HepG2 (cell line): ENCODE measurements at regions of chr20 and their contacts with region 1.

Region 1: DNA sequence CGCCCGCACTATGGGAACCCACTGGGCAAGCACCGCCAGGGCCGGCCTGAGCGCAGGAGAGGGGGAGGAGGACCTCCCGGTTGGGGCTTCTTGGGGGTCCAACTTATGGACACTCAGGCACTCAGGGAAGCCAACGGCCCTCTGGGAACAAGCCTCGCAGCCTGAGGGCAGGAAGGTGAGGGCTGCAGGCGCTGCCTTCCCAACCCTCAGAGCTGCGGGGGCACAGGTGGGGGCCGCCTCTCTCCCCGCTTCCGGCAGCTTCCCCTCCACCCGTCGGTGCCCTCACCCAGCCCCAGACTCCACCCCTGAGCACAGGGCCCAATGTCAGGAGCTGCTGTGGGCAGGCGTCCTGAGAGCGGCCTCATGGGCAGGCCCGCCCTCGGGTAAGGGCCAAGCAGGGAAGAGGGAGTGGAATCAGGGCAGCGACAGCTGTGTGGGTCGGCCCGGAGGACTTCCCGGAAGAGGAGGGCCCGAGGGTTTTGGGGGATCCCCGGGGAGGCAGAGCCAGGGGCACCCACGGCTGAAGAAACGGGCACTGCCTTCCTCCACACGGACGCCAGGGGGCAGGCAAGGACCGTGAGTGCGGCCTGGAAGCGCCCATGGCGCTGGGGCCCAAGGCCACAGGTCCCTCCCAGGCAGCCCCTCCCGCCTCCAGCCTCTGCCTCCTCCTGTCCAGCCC is 488 bp upstream of the PTK6 start:
- DNase-seq: peak; percentile 86
- ATAC-seq: peak; percentile 79
- H3K4me3 ChIP-seq: peak overlapping the region; percentile 37 to 76 (median 64); a peak in 5 of 6 replicates
- H3K27ac ChIP-seq: no peak overlapping the region
- H3K4me1 ChIP-seq: peaks cover 48% of the 10 kb centered on the region
- H3K27me3 ChIP-seq: peaks cover 48 to 65% of the 10 kb centered on the region in 2 experiments
- CTCF ChIP-seq: peak; percentile 99
- EP300 ChIP-seq: peak; percentile 12 to 30; a peak in 2 of 4 replicates
- POLR2A ChIP-seq: 0 out of 4 replicates have a peak, but pooled peaks of 1 of the 2 experiments have one; percentile 30
- RAD21 ChIP-seq: peak; percentile 100

Region 2: GRCh38 chr20:63488315-63489251 is 49.1 kb before region 1 on chr20:
- CTCF ChIA-PET with region 1: no interaction called
- POLR2A ChIA-PET with region 1: no interaction called
- in situ Hi-C with region 1: no loop called
- intact Hi-C with region 1: no loop called
- DNase-seq: no peak
- ATAC-seq: no peak; the same call in 2 of the 3 replicates
- H3K4me3 ChIP-seq: no peak overlapping the region
- H3K27ac ChIP-seq: no peak overlapping the region
- H3K4me1 ChIP-seq: peaks cover 9% of the 10 kb centered on the region
- H3K27me3 ChIP-seq: peaks cover 15 to 54% of the 10 kb centered on the region in 2 experiments
- CTCF ChIP-seq: no peak
- EP300 ChIP-seq: no peak
- POLR2A ChIP-seq: no peak
- RAD21 ChIP-seq: no peak

Region 3: DNA sequence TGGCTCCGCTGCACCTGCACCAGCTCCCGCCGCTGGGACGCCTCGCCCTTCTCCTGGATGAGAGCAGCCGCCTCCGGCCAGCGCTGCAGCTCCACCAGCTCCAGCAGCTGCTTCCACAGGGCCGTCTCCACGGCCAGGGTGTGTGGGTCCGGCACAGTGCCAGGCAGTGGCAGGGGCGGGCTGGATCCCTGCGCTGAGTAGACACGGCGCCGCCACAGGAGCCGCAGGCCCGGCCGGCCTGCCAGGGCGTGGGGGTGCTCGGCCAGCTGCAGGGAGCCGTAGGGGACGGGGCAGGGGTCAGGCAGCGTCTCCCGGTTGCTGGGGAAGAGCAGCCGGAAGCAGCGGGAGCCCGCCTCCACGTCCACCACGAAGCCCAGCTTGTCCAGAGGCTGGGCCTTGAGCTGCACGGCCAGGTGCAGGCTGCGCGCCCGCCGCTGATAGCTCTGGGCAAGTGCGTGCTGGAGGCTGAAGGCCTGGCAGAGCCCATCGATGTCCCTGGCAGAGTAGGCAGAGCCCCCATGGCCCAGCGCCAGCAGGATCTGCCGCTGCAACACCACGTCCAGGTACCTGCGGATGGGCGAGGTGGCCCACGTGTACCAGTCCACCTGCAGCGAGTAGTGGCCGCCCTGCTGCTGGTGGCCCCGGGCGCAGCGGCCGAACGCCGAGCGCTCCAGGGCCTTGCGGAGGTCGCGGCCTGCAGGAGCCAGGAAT is 25.7 kb after region 1 on chr20:
- CTCF ChIA-PET with region 1: no interaction called
- POLR2A ChIA-PET with region 1: no interaction called
- in situ Hi-C with region 1: no loop called
- intact Hi-C with region 1: no loop called
- DNase-seq: no peak
- ATAC-seq: no peak
- H3K4me3 ChIP-seq: no peak overlapping the region
- H3K27ac ChIP-seq: no peak overlapping the region
- H3K4me1 ChIP-seq: peaks cover 6% of the 10 kb centered on the region
- H3K27me3 ChIP-seq: no peaks in the 10 kb centered on the region
- CTCF ChIP-seq: no peak
- EP300 ChIP-seq: no peak
- POLR2A ChIP-seq: no peak
- RAD21 ChIP-seq: no peak

Region 4: DNA sequence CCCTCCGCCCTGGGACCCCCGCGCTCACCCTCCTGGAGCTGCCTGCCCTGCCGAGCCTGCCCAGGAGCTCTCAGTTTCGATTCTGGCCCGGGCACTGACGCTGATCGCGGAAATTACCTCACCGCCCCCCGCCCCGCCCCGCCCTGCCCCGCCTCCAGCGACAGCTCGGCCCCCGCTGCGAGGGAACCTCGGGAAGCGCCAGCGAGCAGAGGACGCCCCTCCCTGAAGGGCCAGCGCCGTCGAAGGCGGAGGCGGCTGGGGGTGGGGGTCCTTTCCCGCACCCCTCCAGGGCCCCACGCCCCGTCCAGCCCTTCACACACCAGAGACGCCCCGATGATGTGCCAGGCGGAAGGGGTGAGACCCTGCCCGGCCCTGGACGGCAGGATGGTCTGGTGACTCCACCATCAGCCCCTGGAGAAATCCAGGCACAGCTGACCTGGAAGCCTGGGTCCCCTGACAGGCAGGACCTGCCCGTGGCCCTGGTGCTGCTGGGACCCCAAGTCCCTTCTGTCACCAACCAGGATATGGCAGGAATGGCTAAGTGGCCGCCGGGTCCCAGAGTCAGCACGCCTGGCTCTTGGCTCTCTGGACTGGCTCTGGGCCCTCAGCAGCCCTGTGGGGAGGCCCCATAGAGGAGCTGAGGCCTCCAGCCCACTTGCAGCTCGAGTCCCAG is 36.6 kb after region 1 on chr20 and contains the start of gene HELZ2:
- CTCF ChIA-PET with region 1: interaction called, 29 read pairs
- POLR2A ChIA-PET with region 1: interaction called, 26 read pairs
- in situ Hi-C with region 1: loop called (anchors 5 kb)
- intact Hi-C with region 1: loop called (anchors 1 kb)
- DNase-seq: peak; percentile 53
- ATAC-seq: peak; percentile 75
- H3K4me3 ChIP-seq: peak within 1 kb of the TSS; percentile 88 to 98 (median 94)
- H3K27ac ChIP-seq: peak within 1 kb of the TSS; percentile 23
- H3K4me1 ChIP-seq: peaks cover 61% of the 10 kb centered on the region
- H3K27me3 ChIP-seq: peaks cover 6 to 22% of the 10 kb centered on the region in 2 experiments; a peak in 3 of 5 replicates
- CTCF ChIP-seq: no peak; the same call in 1 of the 2 replicates
- EP300 ChIP-seq: no peak
- POLR2A ChIP-seq: peak in 1 of 2 experiments; percentile 85; a peak in 2 of 4 replicates
- RAD21 ChIP-seq: no peak
- total RNA-seq, gene HELZ2: 8.4 and 10.1 TPM in 2 replicates

Region 5: DNA sequence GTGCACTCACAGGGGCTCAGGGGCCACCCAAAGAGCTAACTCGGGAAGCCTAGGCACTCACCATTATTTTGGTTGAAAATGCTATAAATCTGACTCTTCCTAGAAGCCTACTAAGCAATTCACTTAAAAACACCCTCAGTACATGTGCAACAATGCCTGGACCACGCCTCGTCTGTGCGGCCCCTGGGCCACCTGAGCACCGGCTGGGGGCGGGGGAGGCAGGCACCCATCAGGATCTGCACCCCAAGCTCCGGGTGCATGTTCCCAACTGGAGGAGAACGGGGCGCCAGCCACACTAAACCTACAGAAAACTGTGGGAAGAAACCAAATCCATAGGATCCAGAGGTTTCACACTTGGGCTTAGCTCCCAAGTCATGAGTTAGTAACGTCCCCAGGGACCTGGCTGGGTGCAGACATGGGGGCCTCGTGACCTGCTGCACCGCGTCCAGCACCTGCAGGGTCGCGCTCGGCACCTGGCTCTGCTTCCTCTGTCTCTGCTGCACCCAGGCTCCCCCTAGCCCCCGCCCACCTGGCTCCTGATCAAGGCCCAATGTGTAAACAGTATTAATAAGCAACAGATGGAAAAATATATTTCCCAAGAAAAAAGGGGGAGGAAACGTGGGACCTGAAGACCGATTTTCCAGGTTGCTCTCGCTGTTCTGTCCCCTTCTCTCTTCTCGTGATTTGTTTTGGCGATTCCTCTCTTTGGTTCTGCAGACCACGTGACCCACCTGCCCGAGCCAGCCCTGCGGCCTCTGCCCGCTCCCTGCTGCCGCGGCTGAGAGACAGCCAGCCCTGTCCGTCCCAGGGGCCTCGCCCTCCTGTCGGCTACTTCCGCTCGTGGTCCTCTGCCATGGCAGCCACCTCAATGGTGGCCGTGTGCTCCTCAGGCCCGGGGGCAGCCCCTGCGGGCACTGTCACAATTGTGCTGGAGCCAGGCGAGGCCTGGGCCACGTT is 51.9 kb after region 1 on chr20:
- CTCF ChIA-PET with region 1: no interaction called
- POLR2A ChIA-PET with region 1: no interaction called
- in situ Hi-C with region 1: no loop called
- intact Hi-C with region 1: no loop called
- DNase-seq: no peak
- ATAC-seq: no peak
- H3K4me3 ChIP-seq: no peak overlapping the region
- H3K27ac ChIP-seq: no peak overlapping the region
- H3K4me1 ChIP-seq: peaks cover 12% of the 10 kb centered on the region; the same call in 1 of the 2 replicates
- H3K27me3 ChIP-seq: 0 out of 5 replicates have a peak, but pooled peaks cover 0 to 3% of the 10 kb centered on the region in 2 experiments
- CTCF ChIP-seq: no peak
- EP300 ChIP-seq: no peak
- POLR2A ChIP-seq: no peak
- RAD21 ChIP-seq: no peak

Region 6: DNA sequence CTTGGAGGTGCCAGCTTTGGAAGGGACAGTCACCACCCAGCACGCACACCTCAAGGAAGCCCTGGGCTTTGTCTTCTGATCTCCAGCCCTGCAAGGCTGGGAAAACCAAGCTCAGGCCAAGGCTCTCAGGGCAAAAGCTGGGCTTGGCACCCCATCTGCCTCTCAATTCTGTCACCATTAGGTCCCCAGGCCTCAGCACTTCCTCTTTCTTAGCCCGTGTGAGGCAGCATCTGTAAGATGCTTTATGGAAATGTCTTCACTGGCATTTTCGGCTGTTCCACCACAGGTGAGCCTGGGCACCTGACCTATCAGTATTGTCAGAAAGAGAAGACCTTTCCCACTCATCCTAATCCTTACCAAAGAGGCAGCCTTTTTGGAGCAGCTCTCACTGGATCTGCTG is 64.7 kb after region 1 on chr20:
- CTCF ChIA-PET with region 1: no interaction called
- POLR2A ChIA-PET with region 1: no interaction called
- in situ Hi-C with region 1: no loop called
- intact Hi-C with region 1: no loop called
- DNase-seq: no peak
- ATAC-seq: no peak
- H3K4me3 ChIP-seq: no peak overlapping the region
- H3K27ac ChIP-seq: no peak overlapping the region
- H3K4me1 ChIP-seq: no peaks in the 10 kb centered on the region
- H3K27me3 ChIP-seq: no peaks in the 10 kb centered on the region
- CTCF ChIP-seq: no peak
- EP300 ChIP-seq: no peak
- POLR2A ChIP-seq: no peak
- RAD21 ChIP-seq: no peak

Region 7: DNA sequence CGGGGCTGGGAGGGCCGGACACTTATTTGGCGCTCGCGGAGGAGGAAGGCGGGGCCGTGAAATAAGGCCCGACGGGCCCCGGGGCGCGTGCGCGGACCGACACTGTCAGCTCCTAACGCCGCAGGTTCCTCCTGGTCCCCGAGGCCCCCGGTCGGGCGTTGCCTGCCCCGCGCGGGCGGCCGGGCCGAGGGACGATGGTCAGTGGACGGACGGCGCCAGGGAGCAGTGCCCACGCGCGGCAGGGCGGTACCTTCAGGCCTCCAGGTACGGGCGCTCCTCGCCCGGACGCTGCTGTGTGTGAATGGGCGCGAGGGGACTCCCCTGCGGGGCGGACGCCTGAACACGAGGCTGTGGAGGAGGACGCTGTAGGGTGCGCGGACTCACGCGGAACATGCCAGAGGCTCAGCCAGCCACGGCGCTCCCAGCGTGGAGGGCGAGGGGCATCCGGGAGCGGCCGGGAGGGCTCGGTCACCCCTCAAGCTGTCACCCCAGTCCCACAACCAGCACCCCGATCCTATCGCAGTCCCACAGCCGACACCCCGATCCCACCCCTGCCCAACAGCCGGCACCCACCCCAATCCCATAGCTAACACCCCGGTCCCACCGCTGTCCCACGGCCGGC is 89.6 kb after region 1 on chr20:
- CTCF ChIA-PET with region 1: no interaction called
- POLR2A ChIA-PET with region 1: interaction called, 13 read pairs
- in situ Hi-C with region 1: no loop called
- intact Hi-C with region 1: loop called (anchors 5 kb)
- DNase-seq: peak; percentile 93
- ATAC-seq: peak; percentile 62
- H3K4me3 ChIP-seq: peak overlapping the region; percentile 77 to 100 (median 98)
- H3K27ac ChIP-seq: peak overlapping the region; percentile 75
- H3K4me1 ChIP-seq: peaks cover 51% of the 10 kb centered on the region
- H3K27me3 ChIP-seq: no peaks in the 10 kb centered on the region; a peak in 1 of 5 replicates
- CTCF ChIP-seq: no peak; the same call in none of the 2 replicates
- EP300 ChIP-seq: peak in 1 of 2 experiments; percentile 51; a peak in 1 of 4 replicates
- POLR2A ChIP-seq: peak; percentile 77 to 93
- RAD21 ChIP-seq: peak; percentile 70

Region 8: GRCh38 chr20:63657937-63658748 is 120.5 kb after region 1 on chr20 and contains the start of gene RTEL1:
- CTCF ChIA-PET with region 1: no interaction called
- POLR2A ChIA-PET with region 1: interaction called, 8 read pairs
- in situ Hi-C with region 1: no loop called
- intact Hi-C with region 1: loop called (anchors 10 kb)
- DNase-seq: peak; percentile 93
- ATAC-seq: peak; percentile 93
- H3K4me3 ChIP-seq: peak within 1 kb of the TSS; percentile 78 to 95 (median 94)
- H3K27ac ChIP-seq: peak within 1 kb of the TSS; percentile 65
- H3K4me1 ChIP-seq: peaks cover 40% of the 10 kb centered on the region
- H3K27me3 ChIP-seq: no peaks in the 10 kb centered on the region; a peak in 1 of 5 replicates
- CTCF ChIP-seq: no peak; the same call in 1 of the 2 replicates
- EP300 ChIP-seq: peak; percentile 24 to 66; a peak in 3 of 4 replicates
- POLR2A ChIP-seq: peak; percentile 74 to 78
- RAD21 ChIP-seq: peak; percentile 79
- total RNA-seq, gene RTEL1: 10.9 and 21.8 TPM in 2 replicates

Region 9: GRCh38 chr20:63973636-63974402 is 436.2 kb after region 1 on chr20:
- CTCF ChIA-PET with region 1: interaction called, 7 read pairs
- POLR2A ChIA-PET with region 1: interaction called, 12 read pairs
- in situ Hi-C with region 1: no loop called
- intact Hi-C with region 1: loop called (anchors 5 kb)
- DNase-seq: peak; percentile 86
- ATAC-seq: peak; percentile 74
- H3K4me3 ChIP-seq: peak overlapping the region; percentile 43 to 75 (median 61); a peak in 5 of 6 replicates
- H3K27ac ChIP-seq: peak overlapping the region; percentile 13
- H3K4me1 ChIP-seq: peaks cover 54% of the 10 kb centered on the region
- H3K27me3 ChIP-seq: no peaks in the 10 kb centered on the region
- CTCF ChIP-seq: peak; percentile 100
- EP300 ChIP-seq: peak in 1 of 2 experiments; percentile 52; a peak in 1 of 4 replicates
- POLR2A ChIP-seq: no peak; a peak in 2 of 4 replicates
- RAD21 ChIP-seq: peak; percentile 99